ENCODE measurements at regions of chr17 and their contacts with region 1.

Region 1: DNA sequence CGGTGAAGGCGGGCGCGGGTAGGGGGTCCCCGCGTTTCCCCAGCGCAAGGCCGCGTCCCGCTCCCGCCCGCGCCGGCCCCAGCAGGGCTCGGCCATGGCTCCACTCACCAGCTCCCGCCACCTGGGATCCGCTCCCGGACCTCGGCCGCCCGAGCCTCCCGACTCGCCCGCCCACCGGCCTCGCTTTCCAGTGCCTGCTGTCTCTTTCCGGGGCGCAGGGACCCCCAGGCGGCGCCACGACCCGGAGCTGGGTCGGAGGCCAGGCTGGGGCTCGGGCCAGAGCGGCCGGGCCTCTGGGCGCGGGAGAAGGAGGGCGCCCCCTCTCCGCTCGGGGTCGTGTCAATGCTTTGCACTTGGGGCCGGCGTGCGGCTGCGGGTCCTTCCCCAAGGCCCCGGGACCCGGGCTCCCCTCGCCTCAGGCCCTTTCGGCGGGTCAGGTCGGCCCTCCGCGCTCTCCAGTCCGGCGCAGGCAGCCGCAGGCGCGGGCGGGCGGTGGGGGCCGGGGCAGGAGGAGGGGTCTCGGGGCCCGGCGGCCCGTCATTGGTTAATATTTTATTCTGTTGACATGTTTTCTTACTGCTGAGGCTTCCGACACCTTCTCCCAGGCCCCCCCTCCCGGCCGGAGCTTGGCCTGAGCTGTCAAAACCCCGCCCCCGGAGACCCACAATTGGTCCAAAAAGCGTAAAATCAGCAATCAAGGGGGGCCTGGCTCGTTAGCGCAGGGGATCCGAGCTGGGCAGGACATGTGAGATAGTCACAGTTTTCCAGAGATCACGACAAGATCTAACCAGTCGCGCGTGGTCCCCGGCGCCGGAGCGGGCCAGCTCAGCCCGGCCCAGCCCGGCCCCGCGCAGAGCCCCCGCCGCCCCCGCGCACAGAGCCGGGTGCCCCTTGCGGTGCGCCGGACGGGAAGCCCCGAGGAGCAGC is at the start of gene TBX2:
- DNase-seq: peak; percentile 92 to 93
- ATAC-seq: peak; percentile 47
- H3K4me3 ChIP-seq: peak within 1 kb of the TSS; percentile 86 to 87
- H3K27ac ChIP-seq: peak within 1 kb of the TSS; percentile 60 to 68
- H3K4me1 ChIP-seq: no peaks in the 10 kb centered on the region
- H3K27me3 ChIP-seq: no peaks in the 10 kb centered on the region
- total RNA-seq, gene TBX2: 28.9 to 42.6 TPM

Region 2: DNA sequence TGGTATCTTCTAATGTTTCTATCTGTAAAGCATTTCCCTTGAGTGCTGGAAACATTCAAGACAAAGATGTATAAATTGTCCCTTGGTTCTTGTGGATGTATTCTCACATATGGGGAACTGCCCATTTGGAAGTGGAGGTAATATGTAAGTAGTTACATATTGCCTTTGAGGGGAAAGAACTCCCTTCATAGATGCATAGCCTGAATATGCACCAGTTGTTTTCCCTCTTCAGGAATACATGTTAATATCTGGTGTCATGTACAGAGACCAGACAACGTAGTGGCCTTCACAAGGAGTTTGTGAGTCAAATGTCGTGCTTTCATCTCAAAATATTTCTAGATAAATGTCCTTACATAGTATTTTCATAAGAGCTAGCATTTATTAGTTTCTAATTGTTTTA is 508.2 kb before region 1 on chr17:
- intact Hi-C with region 1: loop called in 1 of 2 experiments (anchors 5 kb)
- DNase-seq: no peak
- ATAC-seq: no peak
- H3K4me3 ChIP-seq: no peak overlapping the region
- H3K27ac ChIP-seq: no peak overlapping the region
- H3K4me1 ChIP-seq: peaks cover 0 to 1% of the 10 kb centered on the region in 2 donors
- H3K27me3 ChIP-seq: no peaks in the 10 kb centered on the region

Region 3: DNA sequence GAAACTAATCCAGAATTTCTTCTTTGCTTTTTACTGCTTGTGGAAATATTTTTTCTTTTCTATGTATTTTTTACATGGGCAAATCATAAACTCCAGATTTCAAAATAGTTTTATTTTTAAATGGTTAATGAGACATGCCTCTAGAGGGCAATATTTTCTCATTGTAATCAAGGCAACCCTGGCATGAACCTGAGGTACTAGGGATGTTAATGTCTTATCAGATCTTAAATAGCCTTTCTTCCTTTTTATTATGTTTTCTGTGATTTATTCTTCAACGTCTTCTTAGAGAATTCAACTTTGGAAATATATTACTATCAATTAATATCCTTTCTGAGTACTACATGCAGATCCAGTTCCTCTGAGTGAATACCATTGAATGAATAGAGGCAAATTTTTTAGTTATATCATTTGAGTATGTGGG is 397.1 kb before region 1 on chr17:
- intact Hi-C with region 1: loop called (anchors 5 kb)
- DNase-seq: no peak
- ATAC-seq: no peak
- H3K4me3 ChIP-seq: no peak overlapping the region
- H3K27ac ChIP-seq: no peak overlapping the region
- H3K4me1 ChIP-seq: no peaks in the 10 kb centered on the region
- H3K27me3 ChIP-seq: no peaks in the 10 kb centered on the region

Region 4: GRCh38 chr17:61201232-61201640 is 198.2 kb before region 1 on chr17:
- intact Hi-C with region 1: loop called (anchors 5 to 10 kb)
- DNase-seq: no peak
- ATAC-seq: peak; percentile 71
- H3K4me3 ChIP-seq: peak overlapping the region in 1 of 2 donors; percentile 54
- H3K27ac ChIP-seq: peak overlapping the region; percentile 82 to 87
- H3K4me1 ChIP-seq: peaks cover 4% of the 10 kb centered on the region in 2 donors
- H3K27me3 ChIP-seq: no peaks in the 10 kb centered on the region

Region 5: GRCh38 chr17:61314368-61315078 is 84.9 kb before region 1 on chr17:
- intact Hi-C with region 1: loop called in 1 of 2 experiments (anchors 5 kb)
- DNase-seq: peak; percentile 82 to 84
- ATAC-seq: peak; percentile 91
- H3K4me3 ChIP-seq: no peak overlapping the region
- H3K27ac ChIP-seq: peak overlapping the region; percentile 67 to 94
- H3K4me1 ChIP-seq: peaks cover 0 to 5% of the 10 kb centered on the region in 2 donors
- H3K27me3 ChIP-seq: no peaks in the 10 kb centered on the region

Region 6: GRCh38 chr17:61325382-61326073 is 73.9 kb before region 1 on chr17:
- intact Hi-C with region 1: no loop called
- DNase-seq: no peak
- ATAC-seq: no peak
- H3K4me3 ChIP-seq: no peak overlapping the region
- H3K27ac ChIP-seq: no peak overlapping the region
- H3K4me1 ChIP-seq: peaks cover 0 to 3% of the 10 kb centered on the region in 2 donors
- H3K27me3 ChIP-seq: no peaks in the 10 kb centered on the region